Activated CD4-positive, alpha-beta memory T cell treated with anti-CD3 and anti-CD28 coated beads, Interleukin-2, amount 10 ng/mL, durations not matched to agents 7 days and 5 days (primary cell): ENCODE measurements at regions of chr19 and their contacts with region 1.

Region 1: GRCh38 chr19:49391581-49392399 is 3.7 kb downstream of the KASH5 start:
- DNase-seq: peak; percentile 85
- H3K4me3 Mint-ChIP-seq: no peak overlapping the region
- H3K27ac Mint-ChIP-seq: peak overlapping the region; percentile 29
- H3K4me1 Mint-ChIP-seq: peaks cover 33% of the 10 kb centered on the region
- H3K27me3 Mint-ChIP-seq: peaks cover 10% of the 10 kb centered on the region

Region 2: DNA sequence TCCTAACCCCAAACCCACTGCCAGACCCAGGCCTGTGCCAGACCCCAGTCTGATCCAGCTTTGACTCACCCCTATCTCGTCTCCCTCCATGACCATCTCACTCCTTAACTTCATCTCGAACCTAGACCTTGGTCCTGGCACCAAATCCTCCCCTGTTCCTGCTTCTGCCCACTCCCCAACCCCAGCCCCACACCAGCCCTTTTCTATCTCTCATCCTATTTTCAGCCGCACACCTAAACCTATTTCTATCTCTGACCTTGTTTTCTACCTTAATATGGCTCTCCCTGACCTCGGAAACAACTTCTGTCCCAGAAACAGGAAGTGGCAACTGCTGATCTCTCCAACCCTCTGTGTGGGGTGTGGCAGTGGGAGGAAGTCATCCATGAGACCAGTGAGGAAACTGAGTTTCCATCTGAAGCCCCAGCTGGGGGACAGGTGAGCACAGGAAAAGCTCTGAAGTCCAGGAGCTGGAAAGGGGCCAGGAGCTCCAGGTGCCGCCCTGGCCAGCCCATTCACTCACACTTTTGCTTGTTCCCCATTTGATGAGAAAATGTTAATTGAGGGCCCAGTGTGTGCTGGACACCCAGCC is 17.7 kb after region 1 on chr19:
- CTCF ChIA-PET with region 1: interaction called, 24 read pairs
- POLR2A ChIA-PET with region 1: interaction called, 7 read pairs
- DNase-seq: peak; percentile 58
- H3K4me3 Mint-ChIP-seq: peak overlapping the region; percentile 66
- H3K27ac Mint-ChIP-seq: peak overlapping the region; percentile 91
- H3K4me1 Mint-ChIP-seq: peaks cover 55% of the 10 kb centered on the region
- H3K27me3 Mint-ChIP-seq: no peaks in the 10 kb centered on the region

Region 3: DNA sequence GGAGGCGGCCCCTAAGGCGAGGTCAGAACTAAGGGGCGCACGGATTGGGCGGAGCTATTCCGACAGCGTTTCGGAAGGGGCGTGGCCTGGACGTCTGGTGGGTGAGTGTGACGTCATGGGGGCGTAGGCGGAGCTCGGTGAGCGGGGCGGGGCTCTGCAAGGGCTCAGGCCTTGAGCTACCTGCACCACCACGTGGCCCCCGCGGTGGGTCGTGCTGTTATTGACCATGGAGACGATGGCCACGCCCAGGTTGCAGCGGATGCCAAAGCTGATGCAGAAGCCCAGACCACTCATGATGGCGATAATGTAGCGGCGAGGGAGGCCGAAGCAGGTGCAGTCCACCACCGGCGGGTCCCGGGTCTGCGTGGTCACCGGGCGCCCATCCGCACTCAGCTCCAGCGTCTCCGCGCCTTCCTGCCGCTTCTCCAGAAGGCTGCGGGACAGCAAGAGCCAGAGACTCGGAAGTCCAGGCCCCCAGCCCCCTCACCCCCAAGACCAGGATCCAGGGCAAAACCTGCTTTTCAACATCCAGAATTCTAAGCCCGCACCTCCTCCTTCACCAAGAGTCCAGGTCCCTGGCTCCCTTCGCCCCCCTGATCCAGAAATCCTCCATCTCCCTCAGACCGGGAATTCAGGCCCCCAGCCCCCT is 44.7 kb after region 1 on chr19:
- CTCF ChIA-PET with region 1: interaction called, 15 read pairs
- POLR2A ChIA-PET with region 1: interaction called, 3 read pairs
- DNase-seq: peak; percentile 70
- H3K4me3 Mint-ChIP-seq: no peak overlapping the region
- H3K27ac Mint-ChIP-seq: no peak overlapping the region
- H3K4me1 Mint-ChIP-seq: peaks cover 30% of the 10 kb centered on the region
- H3K27me3 Mint-ChIP-seq: peaks cover 87% of the 10 kb centered on the region

Region 4: DNA sequence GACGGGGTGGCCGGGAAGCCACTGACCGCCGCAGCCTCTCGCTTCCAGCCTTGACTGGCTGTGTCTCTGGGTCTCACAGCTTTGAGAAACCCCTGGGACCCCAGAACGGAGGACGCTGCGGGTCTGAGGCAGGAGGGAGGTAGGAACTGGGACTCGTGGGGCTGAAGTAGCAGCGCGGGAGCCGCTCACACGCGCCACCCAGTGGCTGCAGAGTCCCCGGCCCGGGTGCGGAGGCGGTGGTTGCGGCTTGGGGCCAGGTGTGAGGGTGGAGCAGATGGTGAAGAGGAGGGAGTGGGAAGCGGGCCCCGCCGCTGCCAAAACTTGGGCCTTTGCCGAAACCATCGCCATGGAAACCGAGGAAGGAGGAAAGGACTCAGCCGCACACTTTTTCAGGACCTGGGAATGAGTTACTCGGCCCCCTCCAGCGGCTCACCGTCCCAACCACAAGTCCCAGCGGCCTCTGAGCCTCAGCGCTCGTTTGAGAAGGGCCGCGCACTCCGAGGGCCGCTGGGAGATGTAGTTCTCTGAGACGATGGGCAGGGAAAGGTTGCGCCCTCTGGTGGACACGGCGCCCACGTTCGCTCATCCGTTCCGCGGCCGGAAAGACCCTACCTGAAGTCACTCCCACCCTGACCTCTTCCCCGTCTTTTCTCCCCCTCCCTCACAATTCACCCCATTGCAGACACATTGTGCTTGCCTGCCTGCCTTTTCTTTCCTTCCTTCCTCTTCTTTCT is 51.7 kb after region 1 on chr19:
- CTCF ChIA-PET with region 1: interaction called, 15 read pairs
- POLR2A ChIA-PET with region 1: interaction called, 5 read pairs
- DNase-seq: peak; percentile 95
- H3K4me3 Mint-ChIP-seq: peak overlapping the region; percentile 80
- H3K27ac Mint-ChIP-seq: peak overlapping the region; percentile 83
- H3K4me1 Mint-ChIP-seq: peaks cover 62% of the 10 kb centered on the region
- H3K27me3 Mint-ChIP-seq: peaks cover 38% of the 10 kb centered on the region

Region 5: GRCh38 chr19:49451430-49452181 is 59.8 kb after region 1 on chr19 and contains the start of gene PIH1D1:
- CTCF ChIA-PET with region 1: interaction called, 14 read pairs
- POLR2A ChIA-PET with region 1: interaction called, 5 read pairs
- DNase-seq: peak; percentile 97
- H3K4me3 Mint-ChIP-seq: peak within 1 kb of the TSS; percentile 99
- H3K27ac Mint-ChIP-seq: peak within 1 kb of the TSS; percentile 100
- H3K4me1 Mint-ChIP-seq: peaks cover 72% of the 10 kb centered on the region
- H3K27me3 Mint-ChIP-seq: no peaks in the 10 kb centered on the region
- total RNA-seq, gene PIH1D1: 168 to 170 TPM